ENCODE measurements at regions of chr10 and their contacts with region 1.

Region 1: DNA sequence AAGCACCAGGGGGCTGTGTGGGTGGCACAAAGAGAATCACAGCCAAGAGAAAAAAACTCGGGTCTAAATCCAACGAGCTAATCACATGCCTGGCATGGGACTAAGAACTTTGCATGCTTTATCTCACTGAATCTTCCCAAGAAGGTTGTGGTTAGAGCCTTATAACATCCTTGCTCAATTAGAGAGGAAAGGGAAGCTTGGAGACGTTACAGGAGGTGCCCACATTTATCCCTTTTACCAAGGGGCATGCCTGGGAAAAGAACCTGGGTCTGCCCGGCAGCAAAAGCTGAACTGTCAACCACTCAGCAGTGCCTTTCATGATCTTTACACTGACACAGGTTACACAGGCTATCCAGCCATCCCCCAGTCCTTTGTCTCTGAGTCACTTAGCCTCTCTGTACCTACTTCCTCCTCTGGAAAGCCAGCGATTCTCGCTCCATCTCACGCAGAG is 190.1 kb downstream of the PRPF18 start:
- DNase-seq: peak; percentile 20 to 71
- H3K4me3 ChIP-seq: no peak overlapping the region
- H3K27ac ChIP-seq: peak overlapping the region; percentile 16; the same call in 1 of the 2 replicates
- H3K4me1 ChIP-seq: peaks cover 33% of the 10 kb centered on the region
- H3K27me3 ChIP-seq: no peaks in the 10 kb centered on the region
- CTCF ChIP-seq: no peak

Region 2: GRCh38 chr10:13613519-13613918 is 163.4 kb before region 1 on chr10:
- CTCF ChIA-PET with region 1: no interaction called
- POLR2A ChIA-PET with region 1: no interaction called
- intact Hi-C with region 1: loop called (anchors 1 kb)
- DNase-seq: no peak
- H3K4me3 ChIP-seq: no peak overlapping the region
- H3K27ac ChIP-seq: no peak overlapping the region
- H3K4me1 ChIP-seq: peaks cover 17% of the 10 kb centered on the region
- H3K27me3 ChIP-seq: no peaks in the 10 kb centered on the region
- CTCF ChIP-seq: peak; percentile 64

Region 3: GRCh38 chr10:13659897-13660550 is 116.9 kb before region 1 on chr10:
- CTCF ChIA-PET with region 1: interaction called, 4 read pairs
- POLR2A ChIA-PET with region 1: no interaction called
- intact Hi-C with region 1: loop called (anchors 1 kb)
- DNase-seq: peak in 1 of 2 experiments; percentile 38
- H3K4me3 ChIP-seq: no peak overlapping the region
- H3K27ac ChIP-seq: no peak overlapping the region
- H3K4me1 ChIP-seq: no peaks in the 10 kb centered on the region
- H3K27me3 ChIP-seq: no peaks in the 10 kb centered on the region
- CTCF ChIP-seq: peak; percentile 91

Region 4: DNA sequence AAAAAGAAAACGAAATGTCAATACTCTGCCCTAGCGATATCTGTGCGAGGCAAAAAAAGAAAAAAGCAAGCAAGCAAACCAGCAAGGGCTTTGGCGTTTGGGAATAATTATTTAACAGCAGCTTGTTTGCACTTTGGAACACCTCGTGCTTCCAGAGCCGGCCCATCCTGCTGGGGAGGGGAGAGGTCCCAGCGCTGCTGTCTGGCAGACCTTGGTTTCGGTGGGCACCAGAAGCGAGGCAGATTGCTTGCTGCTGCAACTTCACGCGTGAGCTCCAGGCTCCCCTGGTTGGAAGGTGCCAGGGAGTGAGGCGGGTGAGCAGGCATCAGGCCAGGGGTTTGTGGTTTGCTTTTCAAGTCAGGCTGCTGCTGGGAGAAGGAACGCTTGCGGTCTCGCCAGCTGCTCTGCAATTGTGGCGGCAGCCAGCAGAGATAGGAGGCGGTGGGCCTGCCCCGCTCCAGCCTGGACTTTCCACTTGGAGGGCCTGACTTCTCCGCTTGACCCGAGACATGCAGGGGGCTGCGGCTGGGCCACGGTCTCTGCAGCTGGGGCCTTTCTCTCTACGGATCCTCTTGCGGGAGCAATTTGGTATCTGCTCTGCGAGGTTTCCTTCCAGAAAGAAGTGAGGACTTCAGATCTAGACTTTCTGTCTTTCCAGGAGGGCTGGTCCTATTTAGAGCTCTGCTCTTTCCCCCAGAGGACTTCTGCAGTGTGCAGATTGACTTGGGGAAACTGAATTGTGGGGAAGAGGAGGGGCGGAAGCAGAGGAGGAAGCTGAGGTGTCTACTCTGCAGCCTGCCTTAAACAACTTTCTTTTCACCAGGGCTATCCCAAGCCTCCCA is 58.7 kb before region 1 on chr10:
- CTCF ChIA-PET with region 1: no interaction called
- POLR2A ChIA-PET with region 1: no interaction called
- intact Hi-C with region 1: loop called (anchors 2 kb)
- DNase-seq: peak; percentile 69 to 83
- H3K4me3 ChIP-seq: peak overlapping the region; percentile 55
- H3K27ac ChIP-seq: peak overlapping the region; percentile 65
- H3K4me1 ChIP-seq: peaks cover 21% of the 10 kb centered on the region
- H3K27me3 ChIP-seq: no peaks in the 10 kb centered on the region
- CTCF ChIP-seq: no peak

Region 5: DNA sequence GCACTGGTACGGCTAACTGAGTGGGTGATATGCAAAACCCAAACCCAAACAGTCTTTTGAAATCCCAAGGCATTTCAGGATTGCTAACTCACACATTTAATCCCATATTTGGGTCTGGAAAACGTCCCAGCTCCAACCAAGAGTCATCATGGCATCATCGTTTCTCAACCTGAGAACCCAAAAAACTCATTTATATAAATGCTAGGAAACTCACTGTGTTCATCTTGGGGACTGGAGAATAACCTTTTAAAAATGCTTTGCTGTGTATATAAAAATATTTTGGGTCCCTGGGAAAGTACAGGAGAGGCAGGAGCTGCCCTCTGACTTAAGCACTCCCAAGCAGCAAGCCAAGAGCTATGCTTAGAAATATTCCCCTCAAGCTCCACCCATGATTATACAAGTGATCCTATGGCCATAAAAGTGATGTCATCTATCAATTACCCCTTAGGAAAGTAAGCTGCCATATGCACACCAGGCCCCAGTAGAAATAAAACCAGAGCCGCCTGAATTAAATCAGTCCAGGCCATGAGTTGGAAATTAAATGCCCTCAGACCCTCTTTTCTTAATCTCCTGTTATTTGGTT is 201.7 kb after region 1 on chr10:
- CTCF ChIA-PET with region 1: no interaction called
- POLR2A ChIA-PET with region 1: no interaction called
- intact Hi-C with region 1: no loop called
- DNase-seq: no peak
- H3K4me3 ChIP-seq: no peak overlapping the region
- H3K27ac ChIP-seq: no peak overlapping the region
- H3K4me1 ChIP-seq: no peaks in the 10 kb centered on the region
- H3K27me3 ChIP-seq: no peaks in the 10 kb centered on the region
- CTCF ChIP-seq: no peak

Region 6: GRCh38 chr10:14129770-14130169 is 352.9 kb after region 1 on chr10:
- CTCF ChIA-PET with region 1: no interaction called
- POLR2A ChIA-PET with region 1: no interaction called
- intact Hi-C with region 1: no loop called
- DNase-seq: no peak
- H3K4me3 ChIP-seq: no peak overlapping the region
- H3K27ac ChIP-seq: no peak overlapping the region
- H3K4me1 ChIP-seq: no peaks in the 10 kb centered on the region
- H3K27me3 ChIP-seq: no peaks in the 10 kb centered on the region
- CTCF ChIP-seq: no peak

Region 7: DNA sequence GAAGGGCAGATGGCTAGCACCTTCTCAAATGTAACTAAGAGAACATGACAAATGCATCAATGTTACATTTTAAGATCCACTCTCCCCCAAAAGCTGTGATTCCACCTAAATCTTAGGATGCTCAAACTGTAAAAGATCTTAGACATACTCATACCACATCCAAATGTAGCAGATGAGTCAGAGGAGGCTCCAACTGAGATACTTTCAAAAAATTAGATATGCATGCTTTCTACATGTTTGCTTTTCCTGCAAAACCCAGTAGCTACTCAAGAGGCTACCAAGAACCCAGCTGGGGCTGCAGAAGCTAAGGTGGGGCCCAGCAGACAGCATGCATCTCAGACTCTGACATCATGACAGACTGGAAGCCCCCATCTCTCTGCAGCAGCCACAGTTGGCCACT is 585.2 kb after region 1 on chr10:
- CTCF ChIA-PET with region 1: no interaction called
- POLR2A ChIA-PET with region 1: no interaction called
- intact Hi-C with region 1: no loop called
- DNase-seq: no peak
- H3K4me3 ChIP-seq: no peak overlapping the region
- H3K27ac ChIP-seq: no peak overlapping the region
- H3K4me1 ChIP-seq: no peaks in the 10 kb centered on the region
- H3K27me3 ChIP-seq: peaks cover 70% of the 10 kb centered on the region
- CTCF ChIP-seq: no peak